PC-3 (cell line): ENCODE measurements at regions of chr4 and their contacts with region 1.

Region 1: GRCh38 chr4:66169341-66169740 is 499.1 kb upstream of the EPHA5 start:
- DNase-seq: peak; percentile 74
- ATAC-seq: peak; percentile 71
- H3K4me3 ChIP-seq: no peak overlapping the region
- H3K27ac ChIP-seq: no peak overlapping the region
- H3K4me1 ChIP-seq: no peaks in the 10 kb centered on the region
- H3K27me3 ChIP-seq: no peaks in the 10 kb centered on the region
- CTCF ChIP-seq: peak; percentile 88

Region 2: GRCh38 chr4:65880594-65880993 is 288.7 kb before region 1 on chr4:
- CTCF ChIA-PET with region 1: no interaction called
- POLR2A ChIA-PET with region 1: no interaction called
- intact Hi-C with region 1: loop called (anchors 5 kb)
- DNase-seq: peak; percentile 48
- ATAC-seq: peak; percentile 64
- H3K4me3 ChIP-seq: no peak overlapping the region
- H3K27ac ChIP-seq: no peak overlapping the region
- H3K4me1 ChIP-seq: no peaks in the 10 kb centered on the region
- H3K27me3 ChIP-seq: no peaks in the 10 kb centered on the region
- CTCF ChIP-seq: peak; percentile 50

Region 3: GRCh38 chr4:66071911-66072310 is 97.4 kb before region 1 on chr4:
- CTCF ChIA-PET with region 1: no interaction called
- POLR2A ChIA-PET with region 1: no interaction called
- intact Hi-C with region 1: no loop called
- DNase-seq: no peak
- ATAC-seq: no peak
- H3K4me3 ChIP-seq: no peak overlapping the region
- H3K27ac ChIP-seq: no peak overlapping the region
- H3K4me1 ChIP-seq: no peaks in the 10 kb centered on the region; the same call in 1 of the 2 replicates
- H3K27me3 ChIP-seq: no peaks in the 10 kb centered on the region
- CTCF ChIP-seq: no peak